ENCODE measurements at regions of chr2 and their contacts with region 1.

Region 1: GRCh38 chr2:23939987-23940717 is at the start of gene UBXN2A:
- DNase-seq: peak; percentile 95
- H3K4me3 Mint-ChIP-seq: peak within 1 kb of the TSS; percentile 89
- H3K27ac Mint-ChIP-seq: peak within 1 kb of the TSS; percentile 88
- H3K4me1 Mint-ChIP-seq: peaks cover 20% of the 10 kb centered on the region
- H3K27me3 Mint-ChIP-seq: peaks cover 14% of the 10 kb centered on the region
- total RNA-seq, gene UBXN2A: 11.5 and 13.1 TPM in 2 replicates

Region 2: GRCh38 chr2:24046930-24047702 is 107.0 kb after region 1 on chr2 and contains the start of gene WDCP:
- intact Hi-C with region 1: loop called (anchors 1 kb)
- DNase-seq: peak; percentile 98
- H3K4me3 Mint-ChIP-seq: peak within 1 kb of the TSS; percentile 99
- H3K27ac Mint-ChIP-seq: peak within 1 kb of the TSS; percentile 97
- H3K4me1 Mint-ChIP-seq: peaks cover 18% of the 10 kb centered on the region
- H3K27me3 Mint-ChIP-seq: peaks cover 7% of the 10 kb centered on the region
- total RNA-seq, gene WDCP: 22.9 and 25.0 TPM in 2 replicates

Region 3: DNA sequence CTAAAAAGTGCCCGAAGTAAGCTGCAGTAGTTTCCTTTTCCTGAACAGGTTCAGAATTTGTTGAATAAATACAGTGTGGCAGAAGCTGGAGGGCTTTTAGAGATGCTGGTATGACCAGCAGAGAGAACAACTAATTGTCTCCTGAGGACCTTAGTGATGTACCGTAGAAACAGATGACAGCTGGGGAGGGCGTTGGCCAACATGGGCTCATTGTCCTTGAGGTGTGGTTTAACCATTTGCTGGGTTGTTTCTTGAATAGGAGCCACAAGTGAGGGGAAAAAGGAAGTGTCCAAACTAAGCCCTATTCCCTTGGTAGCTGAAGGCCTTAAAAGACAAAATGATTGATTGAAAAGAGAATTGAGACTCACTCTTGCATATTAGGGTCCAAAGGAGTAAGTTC is 223.0 kb after region 1 on chr2:
- intact Hi-C with region 1: no loop called
- DNase-seq: no peak
- H3K4me3 Mint-ChIP-seq: no peak overlapping the region
- H3K27ac Mint-ChIP-seq: no peak overlapping the region
- H3K4me1 Mint-ChIP-seq: no peaks in the 10 kb centered on the region
- H3K27me3 Mint-ChIP-seq: no peaks in the 10 kb centered on the region

Measured in activated CD4-positive, alpha-beta T cell treated with anti-CD3 and anti-CD28 coated beads, Interleukin-2, amount 10 ng/mL, durations not matched to agents 24 days and 14 days (primary cell).